ENCODE measurements at regions of chr21 and their contacts with region 1.

Region 1: GRCh38 chr21:44927587-44928461 is 7.1 kb upstream of the ITGB2 start:
- DNase-seq: peak; percentile 65 to 97 (median 92)
- ATAC-seq: peak; percentile 79
- H3K4me3 ChIP-seq: peak overlapping the region; percentile 83
- H3K4me3 Mint-ChIP-seq: peak overlapping the region; percentile 86
- H3K27ac ChIP-seq: peak overlapping the region; percentile 74 to 79
- H3K27ac Mint-ChIP-seq: peak overlapping the region; percentile 96
- H3K4me1 ChIP-seq: peaks cover 85% of the 10 kb centered on the region
- H3K4me1 Mint-ChIP-seq: peaks cover 85% of the 10 kb centered on the region
- H3K27me3 ChIP-seq: no peaks in the 10 kb centered on the region
- H3K27me3 Mint-ChIP-seq: no peaks in the 10 kb centered on the region
- CTCF ChIP-seq: no peak

Region 2: DNA sequence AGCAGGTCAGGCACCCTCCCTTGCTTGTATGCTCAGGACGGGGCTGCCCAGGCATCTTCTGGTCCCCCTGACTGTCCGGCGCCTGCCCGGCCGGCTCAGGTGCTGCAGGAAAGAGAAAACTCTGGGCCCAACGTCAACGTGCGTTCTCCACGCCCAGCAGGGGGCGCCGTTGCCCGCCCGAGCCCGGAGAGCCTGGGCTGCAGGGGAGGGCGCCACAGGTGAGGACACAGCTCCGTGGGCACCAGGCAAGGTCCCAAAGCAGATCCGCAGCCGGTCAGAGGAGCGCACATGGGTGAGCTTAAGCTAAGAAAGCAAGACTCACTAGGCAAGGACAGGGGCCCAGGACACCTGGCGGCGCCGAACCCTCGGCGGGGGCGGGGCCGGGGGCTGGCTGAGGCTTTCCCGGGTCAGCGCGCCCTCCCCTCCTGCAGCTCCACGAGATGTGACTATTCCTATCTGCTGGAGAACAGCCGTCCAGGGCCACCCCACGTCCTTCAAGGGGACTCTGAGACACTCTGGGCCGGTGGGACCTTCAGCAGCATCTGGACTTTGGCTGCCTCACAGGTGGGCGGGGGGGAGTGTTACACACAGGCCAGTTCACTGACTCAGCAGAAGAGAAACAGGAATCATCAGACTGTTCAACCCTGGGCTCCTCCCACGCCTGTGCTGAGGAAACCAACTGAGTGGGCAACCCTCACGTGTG is 417.2 kb before region 1 on chr21:
- CTCF ChIA-PET with region 1: no interaction called
- POLR2A ChIA-PET with region 1: interaction called, 3 read pairs
- intact Hi-C with region 1: loop called in 1 of 2 experiments (anchors 2 kb)
- DNase-seq: peak; percentile 68 to 91 (median 82)
- ATAC-seq: peak; percentile 96
- H3K4me3 ChIP-seq: peak overlapping the region; percentile 41
- H3K4me3 Mint-ChIP-seq: peak overlapping the region; percentile 42
- H3K27ac ChIP-seq: no peak overlapping the region
- H3K27ac Mint-ChIP-seq: no peak overlapping the region
- H3K4me1 ChIP-seq: peaks cover 12% of the 10 kb centered on the region
- H3K4me1 Mint-ChIP-seq: no peaks in the 10 kb centered on the region
- H3K27me3 ChIP-seq: no peaks in the 10 kb centered on the region
- H3K27me3 Mint-ChIP-seq: no peaks in the 10 kb centered on the region
- CTCF ChIP-seq: peak; percentile 96

Region 3: DNA sequence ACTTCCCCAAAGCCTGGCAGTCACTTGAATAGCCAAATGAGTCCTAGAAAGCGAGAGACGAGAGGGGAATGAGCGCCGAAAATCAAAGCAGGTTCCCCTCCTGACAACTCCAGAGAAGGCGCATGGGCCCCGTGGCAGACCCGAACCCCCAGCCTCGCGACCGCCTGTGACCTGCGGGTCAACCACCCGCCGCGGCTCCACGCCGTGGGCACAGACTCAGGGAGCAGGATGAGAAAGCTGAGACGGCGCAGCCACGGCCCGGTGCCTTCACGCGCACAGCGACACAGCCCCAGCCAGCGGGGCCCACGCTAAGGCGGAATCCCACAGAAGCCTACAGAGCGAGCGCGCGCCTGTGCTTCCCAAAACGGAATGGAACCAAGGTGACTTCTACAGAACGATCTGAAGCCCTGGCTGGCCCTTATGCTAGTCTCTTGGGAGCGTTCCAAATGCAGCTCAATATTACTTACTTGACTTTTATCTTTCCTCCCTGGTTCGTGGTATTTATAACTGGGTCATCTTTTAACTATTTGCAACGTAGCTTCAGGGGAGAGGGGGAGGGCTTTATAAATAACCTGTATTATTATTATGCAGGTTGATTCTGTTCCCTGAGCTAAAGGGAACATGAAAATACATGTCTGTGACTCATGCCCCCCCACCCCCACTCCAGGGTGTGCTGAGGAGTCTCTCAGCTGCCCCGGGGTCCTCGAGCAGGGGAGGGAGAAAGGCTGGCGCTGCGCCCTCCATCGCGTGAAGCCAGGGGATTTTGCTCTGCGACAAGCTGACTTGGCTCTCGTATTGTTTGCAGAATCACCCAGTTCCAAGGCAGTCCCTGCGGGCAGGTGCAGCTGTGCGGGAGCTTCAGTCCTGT is 218.2 kb before region 1 on chr21:
- CTCF ChIA-PET with region 1: no interaction called
- POLR2A ChIA-PET with region 1: no interaction called
- intact Hi-C with region 1: no loop called
- DNase-seq: peak in 5 of 14 experiments; percentile 32 to 47 (median 36)
- ATAC-seq: peak; percentile 59
- H3K4me3 ChIP-seq: peak overlapping the region; percentile 5
- H3K4me3 Mint-ChIP-seq: peak overlapping the region; percentile 62
- H3K27ac ChIP-seq: no peak overlapping the region
- H3K27ac Mint-ChIP-seq: no peak overlapping the region
- H3K4me1 ChIP-seq: peaks cover 54% of the 10 kb centered on the region
- H3K4me1 Mint-ChIP-seq: peaks cover 30% of the 10 kb centered on the region
- H3K27me3 ChIP-seq: peaks cover 78 to 83% of the 10 kb centered on the region in 2 experiments
- H3K27me3 Mint-ChIP-seq: peaks cover 93% of the 10 kb centered on the region
- CTCF ChIP-seq: no peak

Region 4: DNA sequence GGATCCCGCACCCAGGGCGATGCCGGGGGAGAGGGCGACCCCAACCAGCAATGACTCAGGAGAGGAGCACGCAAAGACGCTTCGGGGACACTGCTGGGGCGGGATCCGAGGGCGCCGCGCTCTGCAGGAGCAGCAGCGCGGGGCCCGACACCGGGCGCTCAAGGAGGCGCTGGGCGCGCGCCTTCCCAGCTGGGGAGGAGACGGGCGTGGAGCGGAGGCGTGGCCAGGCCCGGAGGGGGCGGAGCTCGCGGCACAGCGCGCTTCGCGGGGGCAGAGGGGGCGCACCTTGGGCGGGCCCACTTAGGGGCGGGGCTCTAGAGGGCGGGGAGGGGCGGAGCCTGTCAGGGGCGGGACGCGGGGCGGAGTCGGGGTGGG is 110.3 kb before region 1 on chr21:
- CTCF ChIA-PET with region 1: no interaction called
- POLR2A ChIA-PET with region 1: interaction called, 4 read pairs
- intact Hi-C with region 1: loop called in 1 of 2 experiments (anchors 5 kb)
- DNase-seq: peak; percentile 87 to 97 (median 94)
- ATAC-seq: peak; percentile 85
- H3K4me3 ChIP-seq: peak overlapping the region; percentile 61
- H3K4me3 Mint-ChIP-seq: peak overlapping the region; percentile 82
- H3K27ac ChIP-seq: no peak overlapping the region
- H3K27ac Mint-ChIP-seq: peak overlapping the region; percentile 65
- H3K4me1 ChIP-seq: peaks cover 19% of the 10 kb centered on the region
- H3K4me1 Mint-ChIP-seq: peaks cover 13% of the 10 kb centered on the region
- H3K27me3 ChIP-seq: no peaks in the 10 kb centered on the region
- H3K27me3 Mint-ChIP-seq: no peaks in the 10 kb centered on the region
- CTCF ChIP-seq: no peak

Region 5: DNA sequence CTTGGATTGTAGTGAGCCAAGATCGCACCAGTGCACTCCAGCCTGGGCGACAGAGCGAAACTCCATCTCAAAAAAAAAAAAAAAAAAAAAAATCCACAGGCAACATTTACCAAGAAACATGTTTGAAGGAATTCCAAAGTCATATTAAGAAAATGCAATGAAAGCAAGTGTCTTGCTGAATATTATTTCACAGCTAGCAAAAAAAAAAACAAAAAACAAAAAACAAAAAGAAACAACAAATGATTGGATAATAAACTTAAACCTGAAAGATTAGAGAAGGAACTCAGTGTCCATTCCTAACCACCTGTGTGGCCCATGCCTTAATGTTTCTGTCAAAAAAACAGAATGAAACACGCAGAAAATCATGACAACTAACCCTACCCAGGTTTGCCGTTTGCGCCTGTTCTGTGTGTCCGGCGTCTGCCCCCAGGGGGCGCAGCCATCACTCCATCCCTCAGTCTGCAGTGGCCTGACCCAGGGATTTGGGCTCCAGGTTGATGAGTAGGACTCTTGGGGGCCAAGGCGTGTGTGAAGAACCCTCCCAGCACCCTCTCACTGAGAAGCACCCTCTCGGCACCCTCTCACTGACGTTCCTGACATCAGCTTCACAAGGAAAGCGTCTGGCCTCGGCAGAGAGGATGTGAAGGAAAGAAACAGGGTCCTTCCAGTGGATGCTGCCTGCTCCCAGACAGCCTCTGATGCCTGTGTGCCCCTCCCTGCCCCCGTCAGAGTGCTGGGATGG is 35.1 kb before region 1 on chr21:
- CTCF ChIA-PET with region 1: interaction called, 56 read pairs
- POLR2A ChIA-PET with region 1: interaction called, 26 read pairs
- intact Hi-C with region 1: loop called (anchors 1 kb)
- DNase-seq: peak; percentile 66 to 91 (median 76)
- ATAC-seq: peak; percentile 94
- H3K4me3 ChIP-seq: no peak overlapping the region
- H3K4me3 Mint-ChIP-seq: no peak overlapping the region
- H3K27ac ChIP-seq: no peak overlapping the region
- H3K27ac Mint-ChIP-seq: peak overlapping the region; percentile 79
- H3K4me1 ChIP-seq: peaks cover 30% of the 10 kb centered on the region
- H3K4me1 Mint-ChIP-seq: peaks cover 15% of the 10 kb centered on the region
- H3K27me3 ChIP-seq: no peaks in the 10 kb centered on the region
- H3K27me3 Mint-ChIP-seq: no peaks in the 10 kb centered on the region
- CTCF ChIP-seq: peak; percentile 94

Region 6: DNA sequence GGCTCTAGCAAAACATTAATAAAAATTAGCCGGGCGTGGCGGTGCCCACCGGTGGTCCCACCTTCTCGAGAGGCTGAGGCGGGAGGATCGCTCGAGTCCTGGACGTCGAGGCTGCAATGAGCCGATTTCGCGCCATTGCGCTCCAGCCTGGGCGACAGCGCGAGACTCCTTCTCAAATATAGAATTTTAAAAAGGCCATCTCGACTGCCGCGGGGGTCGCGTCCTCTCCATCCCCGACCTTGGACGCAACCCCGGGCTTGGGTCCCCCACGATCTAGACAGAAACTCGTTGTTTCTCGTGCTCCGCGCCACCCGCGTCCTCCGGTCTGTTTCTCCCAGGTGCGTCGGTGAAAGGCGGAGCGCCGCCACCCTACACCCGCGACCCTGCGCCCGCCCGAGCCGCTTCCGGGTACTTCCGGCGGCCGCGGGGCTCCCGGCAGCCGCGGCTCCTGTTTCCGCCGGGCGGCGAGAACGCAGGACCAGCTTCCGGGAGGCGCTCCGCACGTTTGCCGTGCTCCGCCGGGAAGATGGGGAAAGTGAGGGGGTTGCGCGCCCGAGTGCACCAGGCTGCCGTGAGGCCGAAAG is 11.8 kb after region 1 on chr21 and contains the start of gene SLX9:
- CTCF ChIA-PET with region 1: no interaction called
- POLR2A ChIA-PET with region 1: interaction called, 10 read pairs
- intact Hi-C with region 1: no loop called
- DNase-seq: peak; percentile 59 to 90 (median 76)
- ATAC-seq: peak; percentile 94
- H3K4me3 ChIP-seq: peak within 1 kb of the TSS; percentile 83
- H3K4me3 Mint-ChIP-seq: peak within 1 kb of the TSS; percentile 93
- H3K27ac ChIP-seq: peak within 1 kb of the TSS in 1 of 2 donors; percentile 18
- H3K27ac Mint-ChIP-seq: peak within 1 kb of the TSS; percentile 86
- H3K4me1 ChIP-seq: peaks cover 49% of the 10 kb centered on the region
- H3K4me1 Mint-ChIP-seq: peaks cover 38% of the 10 kb centered on the region
- H3K27me3 ChIP-seq: no peaks in the 10 kb centered on the region
- H3K27me3 Mint-ChIP-seq: no peaks in the 10 kb centered on the region
- CTCF ChIP-seq: no peak
- total RNA-seq, gene SLX9: 7.7 to 9.1 TPM

Region 7: GRCh38 chr21:44958471-44959191 is 30.8 kb after region 1 on chr21:
- CTCF ChIA-PET with region 1: no interaction called
- POLR2A ChIA-PET with region 1: no interaction called
- intact Hi-C with region 1: no loop called
- DNase-seq: no peak
- ATAC-seq: no peak
- H3K4me3 ChIP-seq: no peak overlapping the region
- H3K4me3 Mint-ChIP-seq: no peak overlapping the region
- H3K27ac ChIP-seq: no peak overlapping the region
- H3K27ac Mint-ChIP-seq: no peak overlapping the region
- H3K4me1 ChIP-seq: peaks cover 3% of the 10 kb centered on the region
- H3K4me1 Mint-ChIP-seq: peaks cover 9% of the 10 kb centered on the region
- H3K27me3 ChIP-seq: no peaks in the 10 kb centered on the region
- H3K27me3 Mint-ChIP-seq: no peaks in the 10 kb centered on the region
- CTCF ChIP-seq: no peak

Measured in CD4-positive, alpha-beta T cell (primary cell).